ENCODE measurements at regions of chr2 and their contacts with region 1.

Region 1: DNA sequence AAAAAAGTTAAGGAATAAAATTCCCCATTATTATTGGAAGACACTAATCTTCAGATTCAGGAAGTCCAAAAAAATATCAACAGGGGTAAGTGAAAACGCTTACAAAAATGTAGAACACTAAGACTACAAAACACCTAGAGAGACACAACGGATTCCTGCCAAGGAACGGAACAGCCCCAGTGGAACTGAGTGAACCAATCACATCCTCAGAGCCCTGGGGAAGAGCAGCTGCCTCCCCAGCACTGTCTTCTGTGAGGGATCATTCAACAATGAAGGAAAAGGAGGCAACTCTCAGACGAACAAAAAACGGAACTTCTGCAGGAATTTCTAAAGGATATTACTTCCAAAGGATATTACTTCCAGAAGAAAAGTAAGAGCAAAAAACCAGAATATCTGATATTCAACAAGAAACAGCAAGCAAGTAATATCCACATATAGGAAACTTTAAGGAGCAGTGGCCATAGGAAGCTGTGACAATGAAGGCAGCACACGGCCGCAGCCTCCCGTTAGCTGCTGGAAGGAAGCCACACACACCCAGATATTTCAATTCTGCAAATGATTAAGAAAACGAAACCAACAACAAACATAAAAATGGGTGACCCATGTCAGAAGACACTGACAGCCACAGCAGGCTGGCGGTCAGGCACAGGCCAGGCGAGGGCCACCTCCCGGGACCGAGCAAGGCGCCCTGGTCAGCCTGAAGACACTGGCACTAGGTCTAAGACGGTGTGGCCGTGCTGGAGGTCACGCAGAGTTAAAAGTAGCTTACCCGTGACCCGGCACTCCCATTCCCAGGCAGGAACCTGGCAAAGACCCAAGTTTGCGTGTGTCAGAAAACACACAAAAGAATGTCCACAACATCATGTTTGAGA is 81.8 kb downstream of the HDAC4 start:
- DNase-seq: peak; percentile 59 to 86
- ATAC-seq: peak; percentile 65 to 84 (median 76)
- H3K4me3 ChIP-seq: peak overlapping the region; percentile 56
- H3K27ac ChIP-seq: peak overlapping the region; percentile 82
- H3K4me1 ChIP-seq: peaks cover 37% of the 10 kb centered on the region
- H3K27me3 ChIP-seq: no peaks in the 10 kb centered on the region
- CTCF ChIP-seq: no peak

Region 2: GRCh38 chr2:237403024-237403882 is 1915.8 kb before region 1 on chr2:
- intact Hi-C with region 1: loop called in 1 of 2 experiments (anchors 5 kb)
- DNase-seq: peak; percentile 69 to 78
- ATAC-seq: peak; percentile 84 to 95 (median 92)
- H3K4me3 ChIP-seq: no peak overlapping the region
- H3K27ac ChIP-seq: peak overlapping the region; percentile 89
- H3K4me1 ChIP-seq: peaks cover 26% of the 10 kb centered on the region
- H3K27me3 ChIP-seq: no peaks in the 10 kb centered on the region
- CTCF ChIP-seq: no peak